Activated B cell treated with CpG ODN at 0.5 μM for 24 hours (primary cell): ENCODE measurements at regions of chr16 and their contacts with region 1.

Region 1: GRCh38 chr16:3059000-3059722 is 6.3 kb upstream of the IL32 start:
- DNase-seq: peak; percentile 91
- ATAC-seq: peak; percentile 96
- H3K4me3 Mint-ChIP-seq: peak overlapping the region; percentile 83
- H3K27ac Mint-ChIP-seq: peak overlapping the region; percentile 70
- H3K4me1 Mint-ChIP-seq: peaks cover 17% of the 10 kb centered on the region
- H3K27me3 Mint-ChIP-seq: no peaks in the 10 kb centered on the region
- CTCF ChIP-seq: no peak

Region 2: GRCh38 chr16:2968738-2969544 is 90.2 kb before region 1 on chr16 and contains the start of gene PAQR4:
- CTCF ChIA-PET with region 1: no interaction called
- POLR2A ChIA-PET with region 1: no interaction called
- intact Hi-C with region 1: no loop called
- DNase-seq: peak; percentile 86
- ATAC-seq: peak; percentile 80
- H3K4me3 Mint-ChIP-seq: peak within 1 kb of the TSS; percentile 77
- H3K27ac Mint-ChIP-seq: peak within 1 kb of the TSS; percentile 18
- H3K4me1 Mint-ChIP-seq: peaks cover 24% of the 10 kb centered on the region
- H3K27me3 Mint-ChIP-seq: peaks cover 12% of the 10 kb centered on the region
- CTCF ChIP-seq: no peak
- total RNA-seq, gene PAQR4: 2.4 and 2.7 TPM in 2 replicates

Region 3: GRCh38 chr16:3023669-3024478 is 35.3 kb before region 1 on chr16 and contains the starts of genes HCFC1R1 and THOC6:
- CTCF ChIA-PET with region 1: interaction called, 6 read pairs
- POLR2A ChIA-PET with region 1: interaction called, 5 read pairs
- intact Hi-C with region 1: loop called (anchors 2 kb)
- DNase-seq: peak; percentile 93
- ATAC-seq: peak; percentile 76
- H3K4me3 Mint-ChIP-seq: peak within 1 kb of the TSS; percentile 92
- H3K27ac Mint-ChIP-seq: peak within 1 kb of the TSS; percentile 99
- H3K4me1 Mint-ChIP-seq: peaks cover 45% of the 10 kb centered on the region
- H3K27me3 Mint-ChIP-seq: peaks cover 1% of the 10 kb centered on the region
- CTCF ChIP-seq: no peak
- total RNA-seq, gene HCFC1R1: 17.7 and 20.4 TPM in 2 replicates
- total RNA-seq, gene THOC6: 45.8 and 47.1 TPM in 2 replicates

Region 4: DNA sequence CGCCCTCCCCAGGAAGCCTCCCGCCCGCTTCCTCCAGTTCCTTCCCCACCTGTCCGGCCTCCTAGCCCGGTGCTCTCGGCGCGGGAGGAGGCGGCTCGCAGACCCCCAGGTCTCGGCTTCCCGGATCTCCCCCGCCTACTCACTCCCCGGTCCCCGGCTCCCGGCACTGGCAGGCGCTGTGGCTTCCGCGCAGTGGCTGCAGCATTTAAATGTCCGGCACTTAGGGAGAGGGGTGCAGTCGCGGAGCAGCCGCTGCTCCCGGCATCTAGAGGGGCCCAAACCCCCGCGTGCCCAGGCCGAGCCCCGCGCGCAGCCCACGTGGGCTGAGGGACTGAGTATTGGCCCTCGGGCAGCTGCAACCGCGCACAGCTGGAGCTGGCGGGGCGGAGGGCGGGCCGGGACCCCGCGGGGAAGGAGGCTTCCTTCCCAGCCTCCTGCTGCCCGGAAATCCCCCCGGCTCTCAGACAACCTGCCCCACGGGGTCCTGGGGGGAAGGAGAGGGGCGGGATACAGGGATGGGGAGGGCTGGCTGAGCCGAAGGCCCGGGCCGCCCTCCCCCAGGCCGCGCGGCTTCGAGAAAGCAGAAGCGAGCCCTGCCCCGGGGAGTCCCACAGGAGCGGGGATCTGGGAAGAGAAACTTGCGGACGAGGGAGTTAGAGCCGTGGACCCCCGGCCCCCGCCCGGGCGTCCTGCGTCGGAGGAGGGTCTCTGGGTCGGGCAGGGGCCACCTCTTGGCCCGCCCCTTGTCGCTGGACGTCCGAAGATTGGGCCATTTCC is 13.2 kb before region 1 on chr16:
- CTCF ChIA-PET with region 1: interaction called, 5 read pairs
- POLR2A ChIA-PET with region 1: interaction called, 5 read pairs
- intact Hi-C with region 1: loop called (anchors 1 kb)
- DNase-seq: peak; percentile 53
- ATAC-seq: peak; percentile 83
- H3K4me3 Mint-ChIP-seq: peak overlapping the region; percentile 76
- H3K27ac Mint-ChIP-seq: no peak overlapping the region
- H3K4me1 Mint-ChIP-seq: peaks cover 11% of the 10 kb centered on the region
- H3K27me3 Mint-ChIP-seq: peaks cover 41% of the 10 kb centered on the region
- CTCF ChIP-seq: no peak

Region 5: GRCh38 chr16:3094289-3095027 is 35.3 kb after region 1 on chr16:
- CTCF ChIA-PET with region 1: interaction called, 5 read pairs
- POLR2A ChIA-PET with region 1: interaction called, 6 read pairs
- intact Hi-C with region 1: loop called (anchors 2 kb)
- DNase-seq: no peak
- ATAC-seq: no peak
- H3K4me3 Mint-ChIP-seq: no peak overlapping the region
- H3K27ac Mint-ChIP-seq: peak overlapping the region; percentile 26
- H3K4me1 Mint-ChIP-seq: peaks cover 16% of the 10 kb centered on the region
- H3K27me3 Mint-ChIP-seq: no peaks in the 10 kb centered on the region
- CTCF ChIP-seq: no peak

Region 6: GRCh38 chr16:3134564-3135417 is 75.6 kb after region 1 on chr16 and contains the start of gene ZNF213:
- CTCF ChIA-PET with region 1: interaction called, 61 read pairs
- POLR2A ChIA-PET with region 1: interaction called, 31 read pairs
- intact Hi-C with region 1: loop called (anchors 1 kb)
- DNase-seq: peak; percentile 81
- ATAC-seq: peak; percentile 99
- H3K4me3 Mint-ChIP-seq: peak within 1 kb of the TSS; percentile 97
- H3K27ac Mint-ChIP-seq: peak within 1 kb of the TSS; percentile 97
- H3K4me1 Mint-ChIP-seq: peaks cover 24% of the 10 kb centered on the region
- H3K27me3 Mint-ChIP-seq: no peaks in the 10 kb centered on the region
- CTCF ChIP-seq: no peak
- total RNA-seq, gene ZNF213: 5.6 and 5.7 TPM in 2 replicates

Region 7: DNA sequence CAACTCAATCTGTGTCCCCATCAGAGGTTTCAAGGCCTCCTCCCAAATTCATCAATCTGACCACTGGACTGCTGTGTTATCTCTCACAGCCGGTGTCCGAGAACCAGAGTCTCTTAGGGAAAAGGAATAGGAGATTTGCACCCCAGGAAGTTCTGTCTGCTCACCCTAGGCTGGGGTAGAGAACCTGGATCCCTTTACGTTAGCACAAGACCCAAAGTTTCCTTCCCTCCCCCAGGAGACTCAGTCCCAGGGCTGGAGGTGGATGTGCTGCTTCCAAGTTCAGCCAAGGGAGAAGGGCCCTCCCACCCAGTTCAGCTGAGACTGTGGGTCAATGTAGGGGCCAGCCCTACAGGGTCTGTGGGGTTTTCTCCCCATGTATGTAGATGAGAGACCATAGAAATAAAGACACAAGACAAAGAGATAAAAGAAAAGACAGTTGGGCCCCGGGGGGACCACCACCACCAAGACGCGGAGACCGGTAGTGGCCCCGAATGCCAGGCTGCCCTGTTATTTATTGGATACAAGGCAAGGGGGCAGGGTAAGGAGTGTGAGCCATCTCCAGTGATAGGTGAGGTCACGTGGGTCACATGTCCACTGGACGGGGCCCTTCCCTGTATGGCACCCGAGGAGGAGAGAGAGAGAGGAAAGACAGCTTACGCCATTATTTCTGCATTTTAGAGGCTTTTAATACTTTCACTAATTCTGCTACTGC is 106.1 kb after region 1 on chr16:
- CTCF ChIA-PET with region 1: interaction called, 6 read pairs
- POLR2A ChIA-PET with region 1: no interaction called
- intact Hi-C with region 1: loop called (anchors 1 kb)
- DNase-seq: no peak
- ATAC-seq: no peak
- H3K4me3 Mint-ChIP-seq: peak overlapping the region; percentile 57
- H3K27ac Mint-ChIP-seq: peak overlapping the region; percentile 53
- H3K4me1 Mint-ChIP-seq: peaks cover 12% of the 10 kb centered on the region
- H3K27me3 Mint-ChIP-seq: peaks cover 10% of the 10 kb centered on the region
- CTCF ChIP-seq: no peak

Region 8: DNA sequence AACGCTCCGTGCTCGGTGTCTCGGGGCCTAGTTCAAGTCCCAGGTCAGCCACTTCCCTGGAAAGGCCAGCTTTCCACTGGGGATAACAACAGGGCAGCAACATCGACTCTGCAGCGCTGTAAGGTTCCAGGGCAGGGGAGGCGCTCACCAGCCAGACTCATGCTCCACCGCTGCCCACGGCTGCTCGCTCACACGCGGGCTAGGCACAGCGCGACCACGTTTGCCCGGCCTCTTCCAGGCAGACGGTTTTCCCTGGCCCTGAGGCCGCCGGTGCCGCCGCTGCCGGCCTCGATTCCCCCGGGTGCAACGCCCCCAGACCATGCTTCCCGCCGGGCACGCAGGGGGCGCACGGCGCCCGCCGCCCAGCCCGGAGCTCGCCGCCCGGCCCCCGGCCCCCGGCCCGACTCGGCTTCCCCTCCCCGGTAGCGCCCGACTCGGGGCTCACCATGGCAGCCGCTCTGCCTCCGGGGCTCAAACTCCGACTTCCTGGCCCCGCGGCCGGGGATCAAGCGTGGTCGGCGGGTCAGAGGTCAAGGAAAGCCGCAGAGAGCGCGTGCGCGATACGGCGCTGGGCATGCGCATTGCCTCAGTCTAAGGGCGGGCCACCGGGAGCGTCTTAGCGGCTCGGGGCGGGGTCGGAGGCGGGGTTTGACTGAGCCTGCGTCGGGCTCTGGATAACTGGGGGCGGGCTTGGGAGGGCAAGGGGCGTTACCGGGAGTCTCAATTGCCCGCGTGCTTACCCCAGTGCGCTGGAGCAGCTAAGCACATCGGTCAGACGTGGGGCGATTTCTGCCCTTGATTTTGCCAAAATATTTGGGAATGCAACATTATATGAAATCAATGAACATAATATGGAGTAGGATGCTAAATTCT is 1291.9 kb after region 1 on chr16 and contains the start of gene PAM16:
- CTCF ChIA-PET with region 1: no interaction called
- POLR2A ChIA-PET with region 1: interaction called, 12 read pairs
- intact Hi-C with region 1: no loop called
- DNase-seq: peak; percentile 99
- ATAC-seq: peak; percentile 93
- H3K4me3 Mint-ChIP-seq: peak within 1 kb of the TSS; percentile 91
- H3K27ac Mint-ChIP-seq: peak within 1 kb of the TSS; percentile 77
- H3K4me1 Mint-ChIP-seq: peaks cover 16% of the 10 kb centered on the region
- H3K27me3 Mint-ChIP-seq: no peaks in the 10 kb centered on the region
- CTCF ChIP-seq: no peak
- total RNA-seq, gene PAM16: 42.4 and 58.1 TPM in 2 replicates